ENCODE measurements at regions of chr3 and their contacts with region 1.

Region 1: DNA sequence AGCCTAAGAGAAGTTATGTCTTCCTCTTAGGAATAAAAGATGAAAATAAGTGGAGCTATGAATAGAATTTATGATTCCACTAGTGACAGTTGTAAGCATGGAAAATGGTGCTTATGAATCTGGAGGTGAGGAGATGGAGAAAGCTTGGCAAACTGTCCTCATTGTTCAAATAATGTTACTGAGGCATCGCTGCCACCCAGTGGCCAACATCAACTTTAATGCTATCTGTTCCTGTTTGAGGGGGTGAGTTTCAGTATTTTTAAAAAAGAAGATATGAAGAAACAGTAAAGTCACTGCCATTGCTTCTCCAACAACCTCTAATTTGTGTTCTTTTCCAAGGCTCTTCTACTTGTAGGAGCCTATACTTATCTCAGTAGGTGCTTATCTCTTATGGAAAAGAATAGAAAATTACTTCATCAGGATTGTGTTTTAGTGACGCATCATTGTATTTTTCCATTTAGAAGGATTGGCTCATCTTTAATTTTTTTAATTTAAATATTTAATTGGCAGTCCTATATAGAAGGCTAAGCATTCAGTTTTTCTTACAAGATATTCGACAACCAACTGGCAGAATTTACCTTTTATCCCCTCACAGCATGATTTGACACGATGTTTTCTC is 260.4 kb upstream of the P2RY1 start:
- DNase-seq: peak; percentile 64
- ATAC-seq: peak; percentile 97

Region 2: GRCh38 chr3:152477422-152477821 is 97.1 kb before region 1 on chr3:
- intact Hi-C with region 1: loop called (anchors 5 kb)
- DNase-seq: no peak
- ATAC-seq: no peak

Region 3: GRCh38 chr3:152508705-152509104 is 65.9 kb before region 1 on chr3:
- intact Hi-C with region 1: loop called (anchors 2 kb)
- DNase-seq: no peak
- ATAC-seq: peak; percentile 65